Prostate gland (tissue), 2 donors: ENCODE measurements at regions of chrX and their contacts with region 1.

Region 1: DNA sequence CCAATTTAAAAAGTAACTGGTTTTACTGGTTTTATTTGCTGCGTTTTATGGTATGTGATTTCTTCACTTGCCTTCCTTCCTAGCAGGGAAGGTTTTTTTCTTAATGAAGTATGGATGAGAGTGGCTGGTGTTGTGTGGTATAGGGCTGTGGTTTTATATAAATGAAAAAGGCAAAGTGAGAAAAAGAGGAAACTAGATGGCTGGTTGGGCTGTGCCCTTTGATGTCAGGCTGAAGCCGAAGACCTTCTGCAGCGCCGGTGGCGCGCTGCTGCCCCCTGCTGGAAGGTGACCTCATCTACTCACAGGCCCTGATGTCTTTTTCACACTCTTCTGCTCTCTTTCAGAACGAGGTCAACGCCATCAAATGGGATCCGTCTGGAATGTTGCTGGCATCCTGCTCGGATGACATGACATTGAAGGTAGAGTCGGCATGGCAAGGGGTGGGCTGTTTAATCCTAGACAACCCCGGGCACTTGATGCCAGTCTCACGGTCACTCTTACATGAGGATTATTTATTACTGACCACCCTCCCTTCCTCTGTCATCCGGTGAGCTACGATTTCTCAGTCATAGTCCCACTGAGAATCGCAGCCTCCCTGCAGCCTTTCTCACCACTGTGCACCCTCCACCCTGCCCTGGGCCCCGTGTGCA is 56.6 kb downstream of the GPR143 start:
- DNase-seq: peak; percentile 46
- H3K4me3 ChIP-seq: no peak overlapping the region
- H3K27ac ChIP-seq: no peak overlapping the region
- H3K4me1 ChIP-seq: no peaks in the 10 kb centered on the region
- H3K27me3 ChIP-seq: no peaks in the 10 kb centered on the region
- CTCF ChIP-seq: peak; percentile 42 to 76 (median 70)
- POLR2A ChIP-seq: no peak

Region 2: GRCh38 chrX:8820910-8821527 is 888.0 kb before region 1 on chrX:
- intact Hi-C with region 1: loop called (anchors 2 kb)
- DNase-seq: no peak
- H3K4me3 ChIP-seq: no peak overlapping the region
- H3K27ac ChIP-seq: no peak overlapping the region
- H3K4me1 ChIP-seq: no peaks in the 10 kb centered on the region
- H3K27me3 ChIP-seq: no peaks in the 10 kb centered on the region
- CTCF ChIP-seq: no peak
- POLR2A ChIP-seq: no peak

Region 3: GRCh38 chrX:10450229-10450958 is 741.4 kb after region 1 on chrX:
- intact Hi-C with region 1: no loop called
- DNase-seq: no peak
- H3K4me3 ChIP-seq: no peak overlapping the region
- H3K27ac ChIP-seq: no peak overlapping the region
- H3K4me1 ChIP-seq: no peaks in the 10 kb centered on the region
- H3K27me3 ChIP-seq: no peaks in the 10 kb centered on the region
- CTCF ChIP-seq: no peak
- POLR2A ChIP-seq: no peak